Ovary (tissue), 10 donors: ENCODE measurements at regions of chr20 and their contacts with region 1.

Region 1: DNA sequence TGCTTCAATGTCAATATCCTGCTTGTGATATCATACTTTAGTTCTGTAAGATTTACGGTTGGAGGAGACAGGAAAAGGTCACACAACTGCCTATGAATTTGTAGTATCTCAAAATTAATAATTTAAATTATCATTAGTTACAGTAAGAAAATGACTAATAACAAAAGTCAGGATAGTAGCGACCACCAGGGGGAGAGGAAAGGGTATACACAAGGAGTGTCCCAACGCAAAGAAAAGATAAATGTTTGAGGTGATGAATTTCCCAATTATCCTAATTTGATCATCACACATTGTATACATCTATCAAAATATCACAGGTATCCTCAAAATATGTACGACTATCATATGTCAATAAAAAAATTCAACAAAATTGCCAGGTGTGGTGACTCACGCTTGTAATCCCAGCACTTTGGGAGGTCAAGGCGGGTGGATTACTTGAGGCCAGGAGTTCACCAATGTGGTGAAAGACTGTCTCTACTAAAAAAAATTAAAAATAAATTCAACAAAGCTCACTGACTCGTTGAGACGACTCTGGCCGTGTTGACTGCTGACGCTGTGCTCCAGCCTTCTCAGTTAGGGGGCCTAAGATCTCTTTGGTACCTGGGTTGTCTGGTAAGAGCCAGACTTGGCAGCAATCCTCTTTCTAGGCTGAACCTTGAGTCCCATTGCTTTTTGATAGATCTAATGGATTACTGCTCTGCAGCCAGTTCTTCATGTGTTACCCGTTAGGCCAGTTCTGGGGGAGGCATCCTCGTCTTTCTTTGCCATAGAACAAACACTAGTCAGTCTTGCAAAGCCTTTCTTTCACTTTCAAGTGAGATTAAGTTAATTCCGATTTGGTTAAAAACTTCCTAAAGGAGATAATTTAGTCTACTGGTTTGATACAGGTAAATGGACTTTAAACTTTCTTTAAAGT is 9.0 kb upstream of the OVOL2 start:
- DNase-seq: no peak
- H3K4me3 ChIP-seq: no peak overlapping the region
- H3K27ac ChIP-seq: no peak overlapping the region
- H3K4me1 ChIP-seq: no peaks in the 10 kb centered on the region
- H3K27me3 ChIP-seq: no peaks in the 10 kb centered on the region
- CTCF ChIP-seq: no peak
- EP300 ChIP-seq: no peak
- POLR2A ChIP-seq: no peak

Region 2: DNA sequence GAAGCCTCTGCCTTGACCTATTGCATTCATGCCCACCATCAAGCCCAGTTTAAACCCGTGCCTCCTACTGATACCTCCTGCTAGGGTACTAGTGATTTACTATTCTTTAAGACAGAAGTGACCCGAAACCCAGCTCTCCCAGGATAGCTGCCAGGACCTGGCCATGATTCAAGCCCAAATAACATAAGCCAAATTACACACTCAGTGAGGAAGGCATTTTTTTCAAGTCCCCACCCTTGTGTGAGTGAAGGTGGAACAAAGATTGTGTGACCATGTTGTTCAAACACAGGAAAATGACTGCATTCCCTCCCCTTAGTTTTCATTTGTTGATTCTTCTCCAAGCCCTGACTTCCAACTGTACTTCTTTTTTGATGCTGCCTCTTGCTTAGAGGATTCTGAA is 67.3 kb after region 1 on chr20:
- intact Hi-C with region 1: loop called in 1 of 4 experiments (anchors 10 kb)
- DNase-seq: no peak
- H3K4me3 ChIP-seq: no peak overlapping the region
- H3K27ac ChIP-seq: no peak overlapping the region
- H3K4me1 ChIP-seq: peaks cover 2% of the 10 kb centered on the region
- H3K27me3 ChIP-seq: no peaks in the 10 kb centered on the region
- CTCF ChIP-seq: no peak
- EP300 ChIP-seq: no peak
- POLR2A ChIP-seq: no peak

Region 3: GRCh38 chr20:18187020-18187419 is 120.3 kb after region 1 on chr20:
- intact Hi-C with region 1: no loop called
- DNase-seq: no peak
- H3K4me3 ChIP-seq: no peak overlapping the region
- H3K27ac ChIP-seq: no peak overlapping the region
- H3K4me1 ChIP-seq: no peaks in the 10 kb centered on the region
- H3K27me3 ChIP-seq: no peaks in the 10 kb centered on the region
- CTCF ChIP-seq: no peak
- EP300 ChIP-seq: no peak
- POLR2A ChIP-seq: no peak